ENCODE measurements at regions of chr9 and their contacts with region 1.

Region 1: DNA sequence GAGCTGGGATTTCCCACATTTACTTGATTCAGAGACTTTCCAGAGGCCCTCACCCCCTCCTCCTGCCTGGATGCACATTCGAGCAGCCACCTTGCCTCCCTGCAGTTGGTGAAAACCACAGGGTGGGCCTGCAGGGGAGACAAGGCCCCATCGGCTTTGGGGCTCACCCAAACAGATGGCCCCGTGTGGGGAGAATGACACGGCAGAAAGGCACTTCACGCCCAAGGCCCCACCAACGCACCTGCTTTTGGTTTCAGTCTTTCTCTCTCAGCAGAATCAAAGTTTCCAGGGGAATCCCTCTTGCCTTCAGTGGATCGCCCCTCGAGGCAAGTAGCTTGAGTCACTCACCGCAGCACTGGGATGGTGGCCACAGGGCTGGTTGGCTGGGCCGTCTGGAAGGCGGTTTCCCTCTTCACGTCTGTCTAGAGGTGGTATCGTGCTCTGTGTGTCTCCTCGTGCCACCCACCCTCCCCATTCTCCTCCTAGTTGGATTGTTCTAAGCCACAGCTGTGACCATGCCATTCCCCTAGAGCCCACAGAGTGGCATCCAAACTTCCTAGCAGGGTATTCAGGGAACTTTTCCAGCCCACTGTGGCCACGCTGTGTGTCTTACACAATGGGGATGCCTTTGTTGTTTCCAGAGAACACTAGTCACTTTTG is 31.8 kb downstream of the SEC61B start:
- DNase-seq: peak; percentile 95
- H3K4me3 Mint-ChIP-seq: peak overlapping the region; percentile 46
- H3K27ac Mint-ChIP-seq: peak overlapping the region; percentile 90
- H3K4me1 Mint-ChIP-seq: peaks cover 43% of the 10 kb centered on the region
- H3K27me3 Mint-ChIP-seq: peaks cover 8% of the 10 kb centered on the region

Region 2: GRCh38 chr9:99173570-99174504 is 80.1 kb before region 1 on chr9:
- CTCF ChIA-PET with region 1: no interaction called
- POLR2A ChIA-PET with region 1: no interaction called
- intact Hi-C with region 1: no loop called
- DNase-seq: no peak
- H3K4me3 Mint-ChIP-seq: no peak overlapping the region
- H3K27ac Mint-ChIP-seq: no peak overlapping the region
- H3K4me1 Mint-ChIP-seq: peaks cover 8% of the 10 kb centered on the region
- H3K27me3 Mint-ChIP-seq: peaks cover 8% of the 10 kb centered on the region

Region 3: GRCh38 chr9:99221621-99222415 is 32.1 kb before region 1 on chr9 and contains the starts of genes ALG2 and SEC61B:
- CTCF ChIA-PET with region 1: interaction called, 4 read pairs
- POLR2A ChIA-PET with region 1: interaction called, 9 read pairs
- intact Hi-C with region 1: loop called (anchors 1 kb)
- DNase-seq: peak; percentile 94
- H3K4me3 Mint-ChIP-seq: peak within 1 kb of the TSS; percentile 97
- H3K27ac Mint-ChIP-seq: peak within 1 kb of the TSS; percentile 95
- H3K4me1 Mint-ChIP-seq: peaks cover 66% of the 10 kb centered on the region
- H3K27me3 Mint-ChIP-seq: no peaks in the 10 kb centered on the region
- total RNA-seq, gene ALG2: 18.6 to 20.8 TPM
- total RNA-seq, gene SEC61B: 161 to 166 TPM

Region 4: DNA sequence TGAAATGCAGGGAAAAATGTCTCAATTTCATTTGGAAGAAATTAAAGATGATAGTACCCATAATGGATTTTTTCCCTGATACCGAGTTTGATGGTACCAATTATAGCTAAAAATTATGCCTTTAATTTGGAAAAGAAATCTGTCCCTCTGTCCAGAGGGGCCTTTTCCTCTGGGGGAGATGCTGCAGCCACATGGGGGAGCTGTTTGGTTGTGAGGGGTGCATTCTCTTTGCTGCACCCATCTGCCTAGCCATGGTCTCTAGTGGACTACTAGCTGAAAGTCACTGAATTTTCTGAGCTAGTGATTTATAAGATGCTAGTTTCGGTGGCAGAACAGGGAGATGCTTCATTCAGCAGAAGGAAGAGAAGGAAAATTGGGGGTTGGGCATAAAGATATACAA is 22.2 kb before region 1 on chr9:
- CTCF ChIA-PET with region 1: interaction called, 12 read pairs
- POLR2A ChIA-PET with region 1: interaction called, 3 read pairs
- intact Hi-C with region 1: loop called (anchors 2 kb)
- DNase-seq: peak; percentile 60
- H3K4me3 Mint-ChIP-seq: no peak overlapping the region
- H3K27ac Mint-ChIP-seq: no peak overlapping the region
- H3K4me1 Mint-ChIP-seq: peaks cover 15% of the 10 kb centered on the region
- H3K27me3 Mint-ChIP-seq: no peaks in the 10 kb centered on the region